Activated T-helper 2 cell treated with anti-CD3 and anti-CD28 coated beads, Interferon-gamma antibody, Interleukin-2, Interleukin-4, amounts not matched to agents 10 μg/mL and 5 μg/mL and 100 μg/mL, durations not matched to agents 14 hours and 24 hours and 36 hours (primary cell): ENCODE measurements at regions of chr10 and their contacts with region 1.

Region 1: DNA sequence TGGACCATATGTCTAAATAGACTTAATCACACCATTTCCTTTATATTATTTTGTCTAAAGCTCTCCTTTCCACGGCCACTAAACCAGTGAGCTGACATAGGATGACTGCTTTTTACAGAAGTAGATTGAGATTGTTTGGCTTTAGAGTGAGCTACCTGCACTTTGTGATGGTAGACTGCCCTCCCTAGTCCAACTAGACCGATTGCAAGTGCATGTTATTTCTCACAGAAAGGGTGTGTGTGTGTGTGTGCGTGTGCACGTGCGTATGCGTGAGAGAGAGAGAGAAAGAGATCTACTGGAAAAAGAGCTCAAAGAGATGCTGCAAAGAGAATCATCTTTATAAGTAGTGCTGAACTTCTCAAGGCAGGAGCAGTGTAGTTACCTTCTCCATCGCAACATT is 60.7 kb downstream of the VCL start:
- DNase-seq: no peak
- H3K4me3 Mint-ChIP-seq: no peak overlapping the region
- H3K27ac Mint-ChIP-seq: no peak overlapping the region
- H3K4me1 Mint-ChIP-seq: peaks cover 49% of the 10 kb centered on the region
- H3K27me3 Mint-ChIP-seq: no peaks in the 10 kb centered on the region

Region 2: GRCh38 chr10:73480158-73480557 is 578.5 kb before region 1 on chr10:
- intact Hi-C with region 1: loop called (anchors 5 kb)
- DNase-seq: no peak
- H3K4me3 Mint-ChIP-seq: peak overlapping the region; percentile 39
- H3K27ac Mint-ChIP-seq: peak overlapping the region; percentile 53
- H3K4me1 Mint-ChIP-seq: peaks cover 32% of the 10 kb centered on the region
- H3K27me3 Mint-ChIP-seq: no peaks in the 10 kb centered on the region

Region 3: GRCh38 chr10:73991884-73992245 is 66.8 kb before region 1 on chr10:
- intact Hi-C with region 1: loop called (anchors 1 kb)
- DNase-seq: peak; percentile 81
- H3K4me3 Mint-ChIP-seq: no peak overlapping the region
- H3K27ac Mint-ChIP-seq: peak overlapping the region; percentile 65
- H3K4me1 Mint-ChIP-seq: peaks cover 41% of the 10 kb centered on the region
- H3K27me3 Mint-ChIP-seq: no peaks in the 10 kb centered on the region

Region 4: GRCh38 chr10:74021248-74022055 is 37.2 kb before region 1 on chr10:
- intact Hi-C with region 1: loop called (anchors 1 kb)
- DNase-seq: no peak
- H3K4me3 Mint-ChIP-seq: no peak overlapping the region
- H3K27ac Mint-ChIP-seq: peak overlapping the region; percentile 53
- H3K4me1 Mint-ChIP-seq: peaks cover 24% of the 10 kb centered on the region
- H3K27me3 Mint-ChIP-seq: no peaks in the 10 kb centered on the region

Region 5: DNA sequence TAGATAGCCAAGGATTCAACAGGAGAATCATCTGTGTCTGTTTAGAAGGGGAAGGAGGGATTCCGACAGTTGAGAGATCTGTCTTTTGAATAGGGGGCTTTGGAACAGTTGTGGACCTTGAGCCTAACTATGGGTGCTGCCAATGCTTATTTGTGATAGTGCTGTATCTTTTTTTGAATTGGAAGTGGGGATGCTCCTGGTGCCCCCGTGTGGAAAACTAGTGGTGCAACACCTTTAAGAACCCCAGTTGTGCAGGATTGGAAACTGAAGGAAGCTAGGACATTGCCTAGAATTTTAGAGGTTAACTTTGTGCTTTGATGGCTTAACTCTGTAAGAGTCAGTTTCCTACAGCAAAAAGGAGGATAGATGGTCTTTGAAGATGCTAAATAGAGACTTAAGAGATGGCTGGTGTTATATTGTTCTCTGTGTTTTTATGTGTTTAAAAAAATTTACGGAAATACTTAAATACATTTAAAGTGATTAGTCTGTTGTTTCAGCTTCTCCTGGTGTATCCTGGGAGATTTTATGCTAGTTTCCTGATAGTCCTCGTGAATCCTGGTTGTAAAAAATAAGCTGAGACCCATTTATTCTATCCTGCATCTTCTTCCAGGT is 22.6 kb after region 1 on chr10:
- intact Hi-C with region 1: loop called (anchors 1 kb)
- DNase-seq: no peak
- H3K4me3 Mint-ChIP-seq: no peak overlapping the region
- H3K27ac Mint-ChIP-seq: no peak overlapping the region
- H3K4me1 Mint-ChIP-seq: peaks cover 48% of the 10 kb centered on the region
- H3K27me3 Mint-ChIP-seq: no peaks in the 10 kb centered on the region